Dorsolateral prefrontal cortex (tissue), 120 donors: ENCODE measurements at regions of chr1 and their contacts with region 1.

Region 1: GRCh38 chr1:185317034-185317885 is at the start of gene IVNS1ABP:
- DNase-seq: peak; percentile 85 to 96 (median 94)
- H3K4me3 ChIP-seq: peak within 1 kb of the TSS; percentile 64 to 98 (median 93)
- H3K27ac ChIP-seq: peak within 1 kb of the TSS; percentile 82 to 99 (median 97)
- H3K27me3 ChIP-seq: no peaks in the 10 kb centered on the region
- CTCF ChIP-seq: peak in 40 of 56 donors; percentile 3 to 55 (median 32)
- total RNA-seq, gene IVNS1ABP: 36.8 to 146 (median 59.7) TPM

Region 2: DNA sequence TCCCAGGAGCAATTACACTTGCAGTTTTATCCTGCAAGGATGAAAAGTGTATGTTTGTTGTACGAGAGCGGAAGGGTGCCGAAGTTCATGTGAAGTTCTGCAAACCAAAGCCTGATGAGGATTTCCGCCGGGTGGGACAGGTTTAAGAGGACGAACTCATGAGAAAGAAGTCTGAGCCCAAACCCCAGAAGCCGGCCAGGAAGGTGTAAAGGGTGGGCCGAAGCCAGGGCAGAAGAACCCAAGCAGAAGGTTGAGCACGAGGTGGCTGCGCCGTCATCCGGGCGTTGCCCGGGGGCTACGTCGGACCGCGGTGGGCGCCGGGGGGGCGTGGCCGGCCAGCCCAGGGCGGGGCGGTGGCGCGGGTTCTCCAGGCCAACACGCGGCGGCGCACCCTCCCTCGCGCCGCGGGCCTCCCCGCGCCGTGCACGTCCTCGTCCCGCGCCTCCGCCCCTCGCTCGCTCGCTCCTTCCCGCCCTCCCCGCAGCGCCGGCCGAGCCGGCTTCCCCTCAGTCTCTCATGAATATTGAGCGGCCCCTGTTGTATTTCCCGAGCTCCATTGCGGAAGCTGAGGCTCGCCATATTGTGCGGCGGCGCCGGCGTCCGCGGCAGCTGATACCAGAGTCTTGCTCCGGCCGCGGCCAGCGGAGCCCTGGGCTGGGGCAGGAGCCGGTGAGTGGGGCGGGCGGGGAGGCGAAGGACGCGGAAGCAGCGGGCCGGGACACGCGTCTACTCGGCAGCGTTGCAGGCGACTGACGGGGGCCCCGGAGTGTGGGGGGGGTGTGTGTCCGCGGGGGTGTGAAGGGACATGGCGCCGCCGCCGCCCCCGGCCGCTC is 272.1 kb before region 1 on chr1 and contains the start of gene RNF2:
- intact Hi-C with region 1: loop called in 1 of 2 experiments (anchors 10 kb)
- DNase-seq: peak; percentile 59 to 84 (median 79)
- H3K4me3 ChIP-seq: peak within 1 kb of the TSS; percentile 47 to 94 (median 80)
- H3K27ac ChIP-seq: peak within 1 kb of the TSS; percentile 17 to 95 (median 83)
- H3K27me3 ChIP-seq: no peaks in the 10 kb centered on the region
- CTCF ChIP-seq: peak in 14 of 56 donors; percentile 5 to 52 (median 22)
- total RNA-seq, gene RNF2: 9.8 to 31.1 (median 18.9) TPM

Region 3: DNA sequence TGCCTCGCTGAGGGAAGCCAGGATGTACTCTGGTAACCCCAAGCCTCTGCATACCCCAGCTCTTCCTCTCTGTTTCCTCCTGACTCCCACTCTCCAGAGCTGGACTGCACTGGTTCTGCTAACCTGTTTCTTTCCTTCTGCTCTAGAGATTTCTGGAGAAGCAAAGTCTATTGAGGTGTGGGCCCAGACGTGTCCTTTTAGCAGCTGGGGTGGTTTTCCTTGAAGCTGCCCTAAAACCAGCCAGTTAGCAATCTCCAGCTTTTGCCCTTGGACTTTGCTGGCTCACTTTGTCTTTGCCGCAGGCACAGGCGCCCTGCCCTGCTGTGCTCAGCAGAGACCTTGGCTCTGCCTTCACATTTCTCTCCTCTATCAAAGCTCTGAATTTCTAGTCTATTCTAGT is 171.5 kb after region 1 on chr1:
- intact Hi-C with region 1: loop called in 1 of 2 experiments (anchors 5 kb)
- DNase-seq: no peak
- H3K4me3 ChIP-seq: no peak overlapping the region
- H3K27ac ChIP-seq: peak overlapping the region in 2 of 59 donors; percentile 13 to 24
- H3K27me3 ChIP-seq: no peaks in the 10 kb centered on the region
- CTCF ChIP-seq: no peak

Region 4: DNA sequence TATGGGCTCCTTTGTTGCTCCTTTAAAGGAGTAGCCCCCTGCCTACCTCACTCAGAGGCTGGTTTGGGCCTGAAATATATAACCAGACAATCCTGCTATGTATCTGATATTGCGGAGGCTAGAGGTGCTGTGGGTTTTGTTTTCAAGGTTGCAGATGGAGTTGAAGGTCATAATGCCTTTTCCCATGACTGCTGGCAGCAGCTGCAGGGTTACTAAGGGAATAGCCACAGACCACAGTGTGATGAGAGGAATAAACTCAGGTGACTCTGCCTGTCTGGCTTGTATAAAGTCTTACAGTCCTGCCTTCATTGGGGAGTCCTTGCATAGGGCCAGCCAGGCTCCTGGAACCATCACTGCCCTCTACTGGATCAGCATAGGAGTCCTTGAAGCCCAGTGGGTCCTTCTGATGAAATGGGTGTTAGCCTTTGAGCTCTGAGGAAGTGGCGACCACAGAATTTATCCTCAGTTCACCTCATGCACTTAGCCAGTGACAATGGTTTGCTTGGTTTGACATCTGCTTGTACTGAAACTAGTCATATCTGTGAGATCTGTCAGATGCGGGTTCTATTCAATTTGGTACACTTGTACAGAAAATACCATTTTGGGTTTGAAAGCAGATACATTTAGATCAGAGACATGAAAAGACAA is 242.5 kb after region 1 on chr1:
- intact Hi-C with region 1: loop called in 1 of 2 experiments (anchors 2 kb)
- DNase-seq: peak in 3 of 10 donors; percentile 39 to 46 (median 41)
- H3K4me3 ChIP-seq: no peak overlapping the region
- H3K27ac ChIP-seq: no peak overlapping the region
- H3K27me3 ChIP-seq: peaks cover 0 to 4% (median 0%) of the 10 kb centered on the region in 45 donors
- CTCF ChIP-seq: peak in 45 of 56 donors; percentile 12 to 65 (median 39)

Region 5: GRCh38 chr1:185670187-185670627 is 352.9 kb after region 1 on chr1:
- intact Hi-C with region 1: loop called in 1 of 2 experiments (anchors 10 kb)
- DNase-seq: peak in 1 of 10 donors; percentile 20
- H3K4me3 ChIP-seq: peak overlapping the region in 1 of 59 donors; percentile 16
- H3K27ac ChIP-seq: no peak overlapping the region
- H3K27me3 ChIP-seq: peaks cover 0 to 5% (median 0%) of the 10 kb centered on the region in 45 donors
- CTCF ChIP-seq: peak in 52 of 56 donors; percentile 8 to 61 (median 36)